Aorta (tissue), 5 donors: ENCODE measurements at regions of chr10 and their contacts with region 1.

Region 1: DNA sequence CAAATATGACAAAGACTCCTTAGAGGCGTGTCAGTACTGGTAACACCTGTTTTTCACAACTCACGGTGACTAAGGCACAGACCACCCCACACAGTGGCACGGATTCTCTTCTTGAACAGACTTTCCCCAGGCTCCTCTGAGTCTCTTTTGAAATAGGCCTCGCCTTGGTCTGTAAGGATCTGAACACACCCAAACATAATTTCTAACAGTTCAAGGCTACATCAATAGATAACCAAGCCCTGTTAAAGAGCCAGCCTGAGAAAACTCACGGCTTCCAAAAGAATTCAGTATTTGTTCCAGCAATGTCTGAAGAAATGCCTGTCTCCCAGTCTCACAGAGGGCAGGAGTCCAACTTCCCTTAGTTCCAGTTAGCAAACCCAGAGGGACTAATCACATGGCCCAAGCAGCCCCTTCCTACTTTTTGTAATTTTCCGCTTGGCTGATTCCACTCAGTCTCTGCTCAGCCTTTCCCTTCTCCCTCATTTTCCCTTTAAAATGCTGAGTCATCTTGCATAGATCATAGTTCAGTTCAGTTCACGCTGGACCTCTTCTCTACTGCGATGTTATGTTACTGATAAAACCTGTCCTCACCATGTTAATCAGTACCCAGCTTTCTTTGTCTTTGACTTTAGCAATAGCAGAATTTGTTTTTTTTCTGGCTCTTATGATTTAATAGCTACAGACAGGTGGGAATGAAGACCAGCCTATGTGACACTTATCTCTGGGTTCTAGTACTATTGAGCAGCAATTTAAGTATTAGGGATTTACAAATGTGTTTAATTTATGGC is 22.6 kb upstream of the AKR1C3 start:
- DNase-seq: peak in 1 of 2 donors; percentile 82
- ATAC-seq: peak; percentile 95
- H3K4me3 ChIP-seq: no peak overlapping the region
- H3K27ac ChIP-seq: peak overlapping the region; percentile 21 to 98
- H3K4me1 ChIP-seq: peaks cover 0 to 10% of the 10 kb centered on the region in 2 donors
- H3K27me3 ChIP-seq: no peaks in the 10 kb centered on the region

Region 2: GRCh38 chr10:4941540-4942330 is 129.9 kb before region 1 on chr10:
- intact Hi-C with region 1: loop called (anchors 5 to 10 kb)
- DNase-seq: no peak
- ATAC-seq: peak; percentile 49
- H3K4me3 ChIP-seq: no peak overlapping the region
- H3K27ac ChIP-seq: peak overlapping the region; percentile 82 to 94
- H3K4me1 ChIP-seq: peaks cover 4 to 5% of the 10 kb centered on the region in 2 donors
- H3K27me3 ChIP-seq: no peaks in the 10 kb centered on the region

Region 3: GRCh38 chr10:4947635-4948596 is 123.7 kb before region 1 on chr10:
- intact Hi-C with region 1: loop called (anchors 5 to 10 kb)
- DNase-seq: peak in 1 of 2 donors; percentile 58
- ATAC-seq: peak; percentile 93
- H3K4me3 ChIP-seq: no peak overlapping the region
- H3K27ac ChIP-seq: peak overlapping the region; percentile 96 to 98
- H3K4me1 ChIP-seq: peaks cover 2 to 19% of the 10 kb centered on the region in 2 donors
- H3K27me3 ChIP-seq: no peaks in the 10 kb centered on the region

Region 4: GRCh38 chr10:5002013-5002727 is 69.4 kb before region 1 on chr10:
- intact Hi-C with region 1: no loop called
- DNase-seq: no peak
- ATAC-seq: no peak
- H3K4me3 ChIP-seq: peak overlapping the region in 1 of 2 donors; percentile 8
- H3K27ac ChIP-seq: no peak overlapping the region
- H3K4me1 ChIP-seq: no peaks in the 10 kb centered on the region
- H3K27me3 ChIP-seq: no peaks in the 10 kb centered on the region

Region 5: DNA sequence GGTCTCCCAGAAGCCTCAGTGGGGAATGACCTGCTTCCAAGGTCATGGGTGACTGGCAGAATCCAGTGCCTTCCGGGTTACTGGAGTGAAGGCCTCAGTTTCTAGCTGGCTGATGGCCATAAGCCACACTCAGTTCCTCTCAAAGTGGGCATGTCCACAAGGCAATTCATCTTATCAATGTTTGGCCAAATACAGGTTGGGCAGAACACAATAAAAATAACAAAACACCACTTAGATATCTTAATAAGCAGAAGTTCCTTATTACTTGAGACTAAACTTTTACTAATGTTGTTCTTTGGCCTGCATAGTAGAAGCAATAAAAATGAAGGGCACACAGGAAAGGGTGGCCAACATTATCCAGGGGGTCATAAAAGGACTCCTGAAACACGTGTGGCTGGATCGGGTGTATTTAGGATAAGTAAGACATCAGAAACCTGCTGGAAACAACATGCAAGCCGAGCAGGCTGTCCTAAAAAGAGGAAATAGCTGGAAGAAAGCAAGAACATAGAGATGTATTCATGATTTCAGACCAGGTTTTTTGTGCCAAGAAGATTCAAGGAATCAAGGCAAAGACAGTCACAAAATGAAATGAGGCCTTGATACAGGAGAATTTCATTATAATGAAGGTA is 48.3 kb before region 1 on chr10:
- intact Hi-C with region 1: loop called (anchors 5 kb)
- DNase-seq: no peak
- ATAC-seq: no peak
- H3K4me3 ChIP-seq: no peak overlapping the region
- H3K27ac ChIP-seq: no peak overlapping the region
- H3K4me1 ChIP-seq: peaks cover 0 to 9% of the 10 kb centered on the region in 2 donors
- H3K27me3 ChIP-seq: no peaks in the 10 kb centered on the region

Region 6: GRCh38 chr10:5040784-5041470 is 30.7 kb before region 1 on chr10:
- intact Hi-C with region 1: loop called in 1 of 2 experiments (anchors 2 kb)
- DNase-seq: no peak
- ATAC-seq: no peak
- H3K4me3 ChIP-seq: peak overlapping the region in 1 of 2 donors; percentile 39
- H3K27ac ChIP-seq: peak overlapping the region; percentile 36 to 80
- H3K4me1 ChIP-seq: peaks cover 0 to 5% of the 10 kb centered on the region in 2 donors
- H3K27me3 ChIP-seq: no peaks in the 10 kb centered on the region